Mammary epithelial cell (primary cell): ENCODE measurements at regions of chr20 and their contacts with region 1.

Region 1: DNA sequence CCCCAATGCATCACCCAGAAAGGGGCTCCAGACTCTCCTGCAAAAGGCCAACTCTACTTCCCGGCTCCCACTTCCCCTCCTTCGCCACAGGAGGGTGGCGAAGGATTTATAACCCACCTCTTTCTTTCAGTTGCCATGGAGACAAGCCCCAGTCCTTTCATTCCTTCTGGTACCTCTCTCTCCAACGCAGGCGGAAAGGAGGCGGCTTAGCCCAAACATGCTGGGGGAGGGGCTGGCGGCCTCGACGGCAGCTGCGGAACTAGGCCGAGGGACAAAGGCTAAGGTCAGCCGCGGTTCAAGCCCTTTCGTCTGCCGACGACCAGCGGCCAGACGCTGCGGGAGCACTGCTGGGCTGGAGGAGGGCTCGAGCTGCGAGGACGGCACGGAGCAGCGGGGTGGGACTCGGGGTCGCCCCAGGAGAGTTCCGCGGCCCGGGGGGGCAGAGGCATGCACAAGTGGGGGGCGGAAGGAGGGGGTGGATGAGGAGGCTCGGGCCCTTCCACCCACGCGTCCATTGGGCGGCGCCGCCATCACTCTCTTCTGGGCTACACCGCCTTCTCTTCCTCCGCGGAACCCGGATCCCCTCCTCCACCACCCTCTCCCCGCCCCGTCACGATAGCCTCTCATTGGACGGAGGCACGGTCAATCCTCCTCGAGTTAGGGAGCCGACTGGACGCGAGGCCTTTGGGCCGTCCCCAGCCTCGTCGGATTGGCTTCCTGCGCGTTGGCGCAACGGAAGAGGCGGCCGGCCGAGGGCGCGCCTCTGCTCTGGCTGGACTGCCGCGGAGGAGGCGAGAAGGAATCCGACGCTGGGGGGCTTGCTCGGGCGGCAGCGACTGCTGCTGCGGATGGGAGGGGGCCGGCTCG is at the start of gene PANK2:
- DNase-seq: peak; percentile 99
- H3K4me3 ChIP-seq: peak within 1 kb of the TSS; percentile 87 to 97 (median 94)
- H3K27ac ChIP-seq: peak within 1 kb of the TSS; percentile 82
- H3K4me1 ChIP-seq: peaks cover 32% of the 10 kb centered on the region
- H3K27me3 ChIP-seq: no peaks in the 10 kb centered on the region
- CTCF ChIP-seq: peak; percentile 42
- total RNA-seq, gene PANK2: 41.0 to 45.0 TPM

Region 2: DNA sequence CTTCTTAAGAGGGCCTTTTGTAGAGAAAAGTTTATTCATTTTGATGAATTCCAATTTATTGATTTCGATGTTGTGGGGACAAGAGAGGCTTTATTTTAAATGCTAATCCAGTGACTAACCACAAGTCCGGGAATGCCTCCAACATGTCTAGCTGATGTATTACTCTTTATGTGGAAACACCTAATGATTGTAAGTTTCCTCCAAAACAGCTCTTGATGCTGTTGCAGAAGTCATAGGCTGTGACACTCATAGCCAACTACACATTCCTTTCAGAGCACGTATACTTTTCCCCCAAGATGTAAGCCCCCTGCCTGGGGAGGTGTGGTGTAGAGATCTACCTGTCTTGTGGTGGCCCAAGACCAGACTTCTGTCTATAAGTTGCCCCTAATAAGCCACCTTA is 187.8 kb after region 1 on chr20:
- CTCF ChIA-PET with region 1: no interaction called
- dilution Hi-C with region 1: no loop called
- in situ Hi-C with region 1: no loop called
- intact Hi-C with region 1: loop called (anchors 1 kb)
- DNase-seq: peak; percentile 80
- H3K4me3 ChIP-seq: no peak overlapping the region
- H3K27ac ChIP-seq: peak overlapping the region; percentile 1
- H3K4me1 ChIP-seq: peaks cover 5% of the 10 kb centered on the region
- H3K27me3 ChIP-seq: no peaks in the 10 kb centered on the region
- CTCF ChIP-seq: no peak

Region 3: GRCh38 chr20:4082406-4083097 is 193.7 kb after region 1 on chr20:
- CTCF ChIA-PET with region 1: no interaction called
- dilution Hi-C with region 1: no loop called
- in situ Hi-C with region 1: no loop called
- intact Hi-C with region 1: loop called (anchors 1 kb)
- DNase-seq: peak; percentile 79
- H3K4me3 ChIP-seq: no peak overlapping the region
- H3K27ac ChIP-seq: peak overlapping the region; percentile 70
- H3K4me1 ChIP-seq: peaks cover 18% of the 10 kb centered on the region
- H3K27me3 ChIP-seq: no peaks in the 10 kb centered on the region
- CTCF ChIP-seq: no peak